ENCODE measurements at regions of chr22 and their contacts with region 1.

Region 1: DNA sequence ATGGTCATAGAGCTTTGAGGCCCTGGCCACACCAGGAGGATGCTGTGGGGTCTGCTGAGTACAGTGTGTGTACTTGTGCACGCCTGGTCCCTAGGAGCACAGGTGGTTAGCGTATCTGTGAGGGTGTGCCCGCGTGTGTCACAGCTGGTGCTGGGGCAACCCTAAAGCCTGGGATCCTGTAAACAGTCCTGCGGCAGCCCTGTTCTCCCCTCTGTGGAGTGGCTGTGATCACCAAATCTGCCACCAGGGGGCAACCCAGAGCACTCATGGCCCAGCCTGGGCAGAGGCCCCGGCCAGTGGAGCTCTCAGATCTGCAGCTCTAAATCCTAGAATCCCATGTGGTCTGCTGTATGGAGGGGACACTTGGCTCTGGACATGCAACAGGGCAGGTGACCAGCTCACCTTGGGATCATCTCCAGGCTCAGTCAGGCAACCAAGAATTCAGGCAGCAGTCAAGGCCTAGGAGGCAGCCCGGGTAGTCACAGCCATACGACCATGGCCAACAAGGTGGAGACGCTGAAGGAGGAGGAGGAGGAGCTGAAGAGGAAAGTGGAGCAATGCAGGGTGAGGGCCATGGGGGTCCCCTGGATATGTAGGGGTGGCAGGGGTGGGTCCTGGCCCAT is 3.9 kb downstream of the SH3BP1 start:
- DNase-seq: peak; percentile 96

Region 2: GRCh38 chr22:37681556-37682049 is 38.3 kb after region 1 on chr22:
- intact Hi-C with region 1: loop called in 1 of 2 experiments (anchors 5 kb)
- DNase-seq: peak; percentile 91

Region 3: DNA sequence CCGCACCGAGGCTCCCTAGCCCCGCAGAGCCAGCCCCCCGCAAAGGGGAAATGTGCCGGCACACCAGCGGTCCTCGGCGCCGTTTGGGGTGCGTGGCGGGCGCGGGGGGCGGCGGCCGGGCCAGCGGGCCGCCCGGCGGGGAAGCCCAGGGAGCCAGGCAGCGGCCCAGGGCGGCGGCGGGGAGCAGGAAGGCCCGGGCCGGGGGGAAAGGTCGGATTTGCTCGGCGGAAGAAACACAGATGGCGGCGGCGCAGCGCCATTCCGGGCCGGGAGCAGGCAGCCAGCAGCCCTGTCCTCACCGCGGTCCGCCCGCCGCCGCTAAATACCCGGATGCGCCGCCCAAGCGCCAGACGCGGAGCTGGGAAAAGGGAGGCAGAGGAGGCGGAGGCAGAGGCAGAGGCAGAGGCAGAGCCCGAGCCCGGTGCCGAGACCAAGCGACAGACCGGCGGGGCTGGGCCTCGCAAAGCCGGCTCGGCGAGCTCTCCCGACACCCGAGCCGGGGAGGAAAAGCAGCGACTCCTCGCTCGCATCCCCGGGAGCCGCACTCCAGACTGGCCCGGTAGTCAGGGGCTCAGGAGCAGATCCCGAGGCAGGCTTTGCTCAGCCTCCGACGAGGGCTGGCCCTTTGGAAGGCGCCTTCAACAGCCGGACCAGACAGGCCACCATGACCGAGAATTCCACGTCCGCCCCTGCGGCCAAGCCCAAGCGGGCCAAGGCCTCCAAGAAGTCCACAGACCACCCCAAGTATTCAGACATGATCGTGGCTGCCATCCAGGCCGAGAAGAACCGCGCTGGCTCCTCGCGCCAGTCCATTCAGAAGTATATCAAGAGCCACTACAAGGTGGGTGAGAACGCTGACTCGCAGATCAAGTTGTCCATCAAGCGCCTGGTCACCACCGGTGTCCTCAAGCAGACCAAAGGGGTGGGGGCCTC is 161.8 kb after region 1 on chr22:
- intact Hi-C with region 1: loop called in 1 of 2 experiments (anchors 5 kb)
- DNase-seq: peak; percentile 97

Measured in posterior vena cava (tissue), 2 donors.